Pancreas (tissue), 10 donors: ENCODE measurements at regions of chr7 and their contacts with region 1.

Region 1: GRCh38 chr7:121744319-121744718 is 128.6 kb upstream of the PTPRZ1 start:
- DNase-seq: no peak
- ATAC-seq: peak in 2 of 4 donors; percentile 17 to 45
- H3K4me3 ChIP-seq: no peak overlapping the region
- H3K27ac ChIP-seq: no peak overlapping the region
- H3K4me1 ChIP-seq: no peaks in the 10 kb centered on the region
- H3K27me3 ChIP-seq: no peaks in the 10 kb centered on the region
- CTCF ChIP-seq: no peak

Region 2: GRCh38 chr7:121994625-121995410 is 250.5 kb after region 1 on chr7:
- intact Hi-C with region 1: loop called in 1 of 3 experiments (anchors 10 kb)
- DNase-seq: peak in 5 of 6 donors; percentile 37 to 72 (median 47)
- ATAC-seq: peak; percentile 95 to 99 (median 98)
- H3K4me3 ChIP-seq: no peak overlapping the region
- H3K27ac ChIP-seq: no peak overlapping the region
- H3K4me1 ChIP-seq: no peaks in the 10 kb centered on the region
- H3K27me3 ChIP-seq: no peaks in the 10 kb centered on the region
- CTCF ChIP-seq: peak; percentile 31 to 58 (median 39)